Pancreas (tissue), 10 donors: ENCODE measurements at regions of chrX and their contacts with region 1.

Region 1: GRCh38 chrX:109911046-109911445 is 91.9 kb upstream of the TMEM164 start:
- DNase-seq: no peak
- ATAC-seq: no peak
- H3K4me3 ChIP-seq: no peak overlapping the region
- H3K27ac ChIP-seq: no peak overlapping the region
- H3K4me1 ChIP-seq: no peaks in the 10 kb centered on the region
- H3K27me3 ChIP-seq: peaks cover 0 to 7% (median 0%) of the 10 kb centered on the region in 4 donors
- CTCF ChIP-seq: peak in 3 of 4 donors; percentile 15 to 38 (median 31)

Region 2: GRCh38 chrX:109654516-109655109 is 256.4 kb before region 1 on chrX:
- intact Hi-C with region 1: loop called in 1 of 3 experiments (anchors 5 kb)
- DNase-seq: no peak
- ATAC-seq: no peak
- H3K4me3 ChIP-seq: no peak overlapping the region
- H3K27ac ChIP-seq: no peak overlapping the region
- H3K4me1 ChIP-seq: no peaks in the 10 kb centered on the region
- H3K27me3 ChIP-seq: no peaks in the 10 kb centered on the region
- CTCF ChIP-seq: no peak

Region 3: GRCh38 chrX:109760241-109760922 is 150.7 kb before region 1 on chrX:
- intact Hi-C with region 1: no loop called
- DNase-seq: no peak
- ATAC-seq: no peak
- H3K4me3 ChIP-seq: no peak overlapping the region
- H3K27ac ChIP-seq: no peak overlapping the region
- H3K4me1 ChIP-seq: no peaks in the 10 kb centered on the region
- H3K27me3 ChIP-seq: peaks cover 0 to 14% (median 0%) of the 10 kb centered on the region in 4 donors
- CTCF ChIP-seq: no peak